HCT116 (cell line): ENCODE measurements at regions of chr7 and their contacts with region 1.

Region 1: GRCh38 chr7:100705753-100706671 is at the start of gene POP7:
- DNase-seq: peak; percentile 95
- ATAC-seq: peak; percentile 91
- H3K4me3 ChIP-seq: peak within 1 kb of the TSS; percentile 76 to 97
- H3K27ac ChIP-seq: peak within 1 kb of the TSS; percentile 95
- H3K4me1 ChIP-seq: peaks cover 8 to 20% of the 10 kb centered on the region in 2 experiments; a peak in 3 of 4 replicates
- H3K27me3 ChIP-seq: no peaks in the 10 kb centered on the region
- CTCF ChIP-seq: no peak
- POLR2A ChIP-seq: peak; percentile 69
- RAD21 ChIP-seq: no peak
- total RNA-seq, gene POP7: 67.5 TPM

Region 2: DNA sequence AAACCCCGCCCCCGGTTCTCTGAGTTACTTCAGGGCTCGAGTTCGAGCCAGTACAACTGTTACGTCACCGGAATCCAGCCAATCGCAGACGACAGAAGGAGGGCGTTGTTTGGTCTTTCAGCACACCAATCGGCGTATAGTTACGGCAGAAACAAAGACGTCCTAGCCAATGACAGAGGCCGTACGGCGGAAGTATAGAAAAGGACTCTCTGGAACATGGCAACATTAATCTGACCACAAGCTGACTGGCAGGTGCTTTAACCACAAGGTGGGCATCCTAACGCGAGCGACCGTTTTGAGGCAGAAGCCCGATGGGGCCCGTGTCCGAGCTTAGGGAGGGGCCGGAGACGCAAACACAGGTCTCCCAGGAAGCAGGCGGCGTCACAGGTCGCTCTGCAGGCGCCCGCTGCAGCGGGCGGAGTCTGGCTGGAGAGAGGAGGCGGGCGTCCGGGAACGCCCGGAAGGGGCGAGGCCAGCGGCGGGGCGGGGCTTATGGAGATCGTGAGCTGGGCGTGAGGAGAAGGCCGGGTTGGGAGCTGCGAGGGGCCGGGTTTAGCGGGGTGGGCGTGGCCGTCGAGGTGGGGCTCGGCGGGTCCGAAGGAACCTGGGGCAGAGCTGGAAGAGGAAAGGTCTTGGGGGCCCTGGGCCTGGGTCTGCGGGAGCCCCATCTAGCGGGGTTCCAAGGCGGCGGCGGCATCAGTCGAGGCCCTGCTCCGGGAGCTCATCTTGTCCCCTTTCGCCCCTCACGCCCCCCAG is 93.9 kb before region 1 on chr7 and contains the start of gene MOSPD3:
- CTCF ChIA-PET with region 1: interaction called, 12 read pairs
- POLR2A ChIA-PET with region 1: interaction called, 4 read pairs
- RAD21 ChIA-PET with region 1: no interaction called
- intact Hi-C with region 1: no loop called
- DNase-seq: peak; percentile 99
- ATAC-seq: peak; percentile 97
- H3K4me3 ChIP-seq: peak within 1 kb of the TSS; percentile 73 to 89
- H3K27ac ChIP-seq: peak within 1 kb of the TSS; percentile 89
- H3K4me1 ChIP-seq: peaks cover 3 to 27% of the 10 kb centered on the region in 2 experiments
- H3K27me3 ChIP-seq: no peaks in the 10 kb centered on the region
- CTCF ChIP-seq: no peak
- POLR2A ChIP-seq: peak; percentile 59
- RAD21 ChIP-seq: no peak
- total RNA-seq, gene MOSPD3: 32.8 TPM

Region 3: DNA sequence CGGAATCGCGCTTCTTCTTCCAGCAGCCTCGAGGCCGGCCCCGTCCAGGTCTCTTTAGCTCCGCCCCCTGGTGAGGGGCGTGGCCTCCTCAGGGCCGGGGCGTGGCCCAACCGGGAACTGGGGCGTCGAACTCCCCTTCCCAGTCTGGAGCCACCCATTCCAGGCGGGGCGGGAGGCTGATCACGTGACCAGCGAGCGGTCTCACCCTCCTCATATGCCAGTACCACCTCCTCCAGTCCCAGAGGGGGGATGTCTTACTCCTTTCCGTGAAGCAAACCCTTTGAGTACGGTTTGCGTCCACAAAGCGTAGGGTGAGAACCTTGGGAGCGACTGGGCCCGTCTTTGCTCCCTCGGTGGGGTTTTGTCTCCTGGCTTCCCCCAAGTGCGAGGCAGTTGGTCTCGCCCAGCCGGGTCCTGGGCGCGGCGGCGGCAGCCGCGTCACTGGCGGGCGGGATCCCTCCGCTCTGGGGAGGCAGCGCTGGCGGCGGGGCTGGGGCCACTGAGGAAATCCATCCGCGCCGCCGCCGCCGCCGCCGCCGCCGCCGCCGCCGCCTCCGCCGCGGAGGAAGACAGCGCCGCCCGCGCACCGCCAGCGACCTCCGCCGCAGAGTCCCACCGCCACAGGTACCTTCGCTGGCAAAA is 32.6 kb before region 1 on chr7 and contains the start of gene GNB2:
- CTCF ChIA-PET with region 1: no interaction called
- POLR2A ChIA-PET with region 1: interaction called, 3 read pairs
- RAD21 ChIA-PET with region 1: no interaction called
- intact Hi-C with region 1: loop called (anchors 1 kb)
- DNase-seq: peak; percentile 97
- ATAC-seq: peak; percentile 85
- H3K4me3 ChIP-seq: peak within 1 kb of the TSS; percentile 88 to 96
- H3K27ac ChIP-seq: peak within 1 kb of the TSS; percentile 95
- H3K4me1 ChIP-seq: peaks cover 0 to 11% of the 10 kb centered on the region in 2 experiments; a peak in 1 of 4 replicates
- H3K27me3 ChIP-seq: no peaks in the 10 kb centered on the region
- CTCF ChIP-seq: no peak
- POLR2A ChIP-seq: peak; percentile 31
- RAD21 ChIP-seq: no peak
- total RNA-seq, gene GNB2: 246 TPM

Region 4: GRCh38 chr7:100720645-100721504 is 14.9 kb after region 1 on chr7:
- CTCF ChIA-PET with region 1: interaction called, 34 read pairs
- POLR2A ChIA-PET with region 1: interaction called, 10 read pairs
- RAD21 ChIA-PET with region 1: interaction called, 3 to 6 read pairs
- intact Hi-C with region 1: no loop called
- DNase-seq: no peak
- ATAC-seq: no peak
- H3K4me3 ChIP-seq: no peak overlapping the region
- H3K27ac ChIP-seq: no peak overlapping the region
- H3K4me1 ChIP-seq: peaks cover 4 to 10% of the 10 kb centered on the region in 2 experiments; a peak in 3 of 4 replicates
- H3K27me3 ChIP-seq: no peaks in the 10 kb centered on the region
- CTCF ChIP-seq: no peak
- POLR2A ChIP-seq: no peak
- RAD21 ChIP-seq: no peak

Region 5: GRCh38 chr7:100803398-100804233 is 97.6 kb after region 1 on chr7:
- CTCF ChIA-PET with region 1: interaction called, 10 read pairs
- POLR2A ChIA-PET with region 1: interaction called, 3 read pairs
- RAD21 ChIA-PET with region 1: interaction called in 1 of 2 experiments, 3 read pairs
- intact Hi-C with region 1: no loop called
- DNase-seq: no peak
- ATAC-seq: no peak
- H3K4me3 ChIP-seq: no peak overlapping the region
- H3K27ac ChIP-seq: peak overlapping the region; percentile 48; the same call in 1 of the 2 replicates
- H3K4me1 ChIP-seq: peaks cover 33 to 48% of the 10 kb centered on the region in 2 experiments
- H3K27me3 ChIP-seq: no peaks in the 10 kb centered on the region
- CTCF ChIP-seq: no peak
- POLR2A ChIP-seq: no peak
- RAD21 ChIP-seq: no peak

Region 6: DNA sequence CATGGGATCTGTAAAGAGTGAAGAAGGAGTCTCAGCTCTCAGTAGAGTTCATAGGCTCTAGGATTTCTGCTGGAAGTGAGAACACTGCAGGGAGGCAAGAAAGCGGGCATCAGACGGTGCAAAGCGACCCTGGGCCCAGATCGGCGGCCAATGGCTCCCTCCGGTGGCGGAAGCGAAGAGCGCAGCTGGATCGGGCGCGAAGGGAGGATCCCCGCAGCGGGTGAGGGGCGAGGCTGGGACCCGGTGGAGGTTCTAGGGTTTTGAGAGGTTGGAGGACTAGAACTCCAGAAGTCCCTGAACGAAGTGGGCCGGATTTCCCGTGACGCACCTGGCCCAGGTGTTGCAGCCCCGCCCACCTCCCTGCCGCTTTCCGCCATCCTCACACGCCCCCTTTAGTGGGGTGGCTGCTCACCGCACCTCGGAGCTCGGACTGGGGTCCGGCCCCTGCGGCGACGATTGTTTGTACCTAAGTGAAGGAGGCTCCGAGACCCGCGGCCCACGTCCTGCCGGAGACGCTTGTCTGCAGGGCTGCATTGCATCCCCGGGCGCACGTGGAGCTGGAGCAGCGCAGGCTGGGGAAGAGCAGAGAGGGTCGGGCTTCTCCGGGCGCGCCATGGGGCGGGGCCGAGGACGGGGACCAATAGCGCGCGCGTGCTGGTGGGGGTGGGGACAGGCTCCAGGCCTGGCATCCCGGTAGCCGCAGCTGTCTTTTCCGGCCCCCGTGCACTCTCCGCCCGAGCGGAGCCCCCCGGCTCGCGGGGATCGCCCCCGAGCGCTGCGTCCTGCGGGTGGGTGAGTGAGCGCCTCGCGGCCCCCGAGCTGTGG is 146.2 kb after region 1 on chr7 and contains the start of gene SLC12A9:
- CTCF ChIA-PET with region 1: interaction called, 52 read pairs
- POLR2A ChIA-PET with region 1: interaction called, 17 read pairs
- RAD21 ChIA-PET with region 1: interaction called, 7 to 12 read pairs
- intact Hi-C with region 1: loop called (anchors 1 kb)
- DNase-seq: peak; percentile 81
- ATAC-seq: peak; percentile 97
- H3K4me3 ChIP-seq: peak within 1 kb of the TSS; percentile 83 to 84
- H3K27ac ChIP-seq: peak within 1 kb of the TSS; percentile 63
- H3K4me1 ChIP-seq: peaks cover 6 to 16% of the 10 kb centered on the region in 2 experiments; a peak in 3 of 4 replicates
- H3K27me3 ChIP-seq: no peaks in the 10 kb centered on the region
- CTCF ChIP-seq: peak; percentile 84 to 95 (median 94)
- POLR2A ChIP-seq: peak; percentile 17
- RAD21 ChIP-seq: peak; percentile 99
- total RNA-seq, gene SLC12A9: 24.6 TPM